Caco-2 (cell line): ENCODE measurements at regions of chr2 and their contacts with region 1.

Region 1: GRCh38 chr2:10043906-10044601 is 704 bp downstream of the KLF11 start:
- DNase-seq: peak; percentile 98 to 100
- H3K4me3 ChIP-seq: peak overlapping the region; percentile 96
- H3K4me3 Mint-ChIP-seq: peak overlapping the region; percentile 95
- H3K27ac Mint-ChIP-seq: peak overlapping the region; percentile 96
- H3K4me1 ChIP-seq: peaks cover 20% of the 10 kb centered on the region
- H3K4me1 Mint-ChIP-seq: peaks cover 16% of the 10 kb centered on the region
- H3K27me3 ChIP-seq: no peaks in the 10 kb centered on the region
- H3K27me3 Mint-ChIP-seq: no peaks in the 10 kb centered on the region
- CTCF ChIP-seq: no peak

Region 2: GRCh38 chr2:9799665-9800632 is 244.1 kb before region 1 on chr2:
- CTCF ChIA-PET with region 1: interaction called, 4 read pairs
- POLR2A ChIA-PET with region 1: no interaction called
- intact Hi-C with region 1: loop called (anchors 1 kb)
- DNase-seq: peak; percentile 88 to 93
- H3K4me3 ChIP-seq: no peak overlapping the region
- H3K4me3 Mint-ChIP-seq: peak overlapping the region; percentile 56
- H3K27ac Mint-ChIP-seq: no peak overlapping the region
- H3K4me1 ChIP-seq: peaks cover 45% of the 10 kb centered on the region
- H3K4me1 Mint-ChIP-seq: peaks cover 29% of the 10 kb centered on the region
- H3K27me3 ChIP-seq: no peaks in the 10 kb centered on the region
- H3K27me3 Mint-ChIP-seq: no peaks in the 10 kb centered on the region
- CTCF ChIP-seq: peak; percentile 95 to 99

Region 3: DNA sequence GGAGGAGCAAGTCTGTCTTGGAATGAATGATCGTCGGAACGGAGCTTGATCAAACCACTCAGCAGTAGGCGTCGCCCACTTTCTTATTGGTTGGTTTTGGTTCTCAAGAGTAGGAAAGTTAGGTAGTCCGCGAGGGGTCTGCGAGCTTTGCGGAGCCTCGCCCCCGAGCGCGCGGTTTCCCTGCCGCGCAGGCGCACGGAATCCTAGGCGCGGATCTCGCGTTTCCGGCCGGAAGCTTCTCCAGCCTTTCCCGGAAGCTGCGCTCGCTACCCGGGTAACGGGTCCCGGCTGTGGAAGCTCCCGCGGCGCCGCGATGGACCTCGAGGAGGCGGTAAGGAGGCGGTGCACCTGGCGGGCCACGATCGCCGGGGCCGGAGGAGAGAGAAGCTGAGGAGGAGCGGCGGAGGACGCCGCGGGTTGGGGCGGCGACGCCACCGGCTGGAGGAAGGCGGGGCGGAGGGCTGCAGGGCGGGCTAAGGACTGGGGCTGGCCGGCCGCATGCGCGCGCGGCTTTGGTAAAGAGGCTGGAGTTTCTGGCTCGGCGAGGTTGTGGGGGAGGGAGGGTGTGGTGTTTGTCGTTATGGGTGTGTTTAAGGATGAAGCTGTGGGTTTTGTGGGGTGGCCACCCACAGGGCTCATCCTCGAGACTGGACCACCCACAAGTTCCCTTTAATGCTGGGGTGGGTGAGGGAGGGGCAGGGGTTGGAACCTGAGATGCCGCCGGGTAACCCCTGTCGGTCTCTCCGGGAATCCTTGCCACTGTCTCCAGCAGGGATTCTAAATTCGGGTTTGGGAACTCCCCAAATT is 200.6 kb before region 1 on chr2 and contains the start of gene TAF1B:
- CTCF ChIA-PET with region 1: interaction called, 7 read pairs
- POLR2A ChIA-PET with region 1: interaction called, 15 read pairs
- intact Hi-C with region 1: loop called (anchors 1 kb)
- DNase-seq: peak; percentile 94 to 96
- H3K4me3 ChIP-seq: peak within 1 kb of the TSS; percentile 74
- H3K4me3 Mint-ChIP-seq: peak within 1 kb of the TSS; percentile 89
- H3K27ac Mint-ChIP-seq: peak within 1 kb of the TSS; percentile 89
- H3K4me1 ChIP-seq: 0 out of 2 replicates have a peak, but pooled peaks cover 8% of the 10 kb centered on the region
- H3K4me1 Mint-ChIP-seq: peaks cover 22% of the 10 kb centered on the region
- H3K27me3 ChIP-seq: no peaks in the 10 kb centered on the region
- H3K27me3 Mint-ChIP-seq: no peaks in the 10 kb centered on the region
- CTCF ChIP-seq: peak; percentile 26 to 30
- total RNA-seq, gene TAF1B: 24.8 and 25.3 TPM in 2 replicates

Region 4: GRCh38 chr2:10057231-10058107 is 13.4 kb after region 1 on chr2:
- CTCF ChIA-PET with region 1: interaction called, 19 read pairs
- POLR2A ChIA-PET with region 1: interaction called, 13 read pairs
- intact Hi-C with region 1: no loop called
- DNase-seq: peak; percentile 90 to 95
- H3K4me3 ChIP-seq: peak overlapping the region; percentile 37
- H3K4me3 Mint-ChIP-seq: peak overlapping the region; percentile 71
- H3K27ac Mint-ChIP-seq: peak overlapping the region; percentile 71
- H3K4me1 ChIP-seq: peaks cover 13% of the 10 kb centered on the region
- H3K4me1 Mint-ChIP-seq: peaks cover 14% of the 10 kb centered on the region
- H3K27me3 ChIP-seq: no peaks in the 10 kb centered on the region
- H3K27me3 Mint-ChIP-seq: no peaks in the 10 kb centered on the region
- CTCF ChIP-seq: no peak

Region 5: DNA sequence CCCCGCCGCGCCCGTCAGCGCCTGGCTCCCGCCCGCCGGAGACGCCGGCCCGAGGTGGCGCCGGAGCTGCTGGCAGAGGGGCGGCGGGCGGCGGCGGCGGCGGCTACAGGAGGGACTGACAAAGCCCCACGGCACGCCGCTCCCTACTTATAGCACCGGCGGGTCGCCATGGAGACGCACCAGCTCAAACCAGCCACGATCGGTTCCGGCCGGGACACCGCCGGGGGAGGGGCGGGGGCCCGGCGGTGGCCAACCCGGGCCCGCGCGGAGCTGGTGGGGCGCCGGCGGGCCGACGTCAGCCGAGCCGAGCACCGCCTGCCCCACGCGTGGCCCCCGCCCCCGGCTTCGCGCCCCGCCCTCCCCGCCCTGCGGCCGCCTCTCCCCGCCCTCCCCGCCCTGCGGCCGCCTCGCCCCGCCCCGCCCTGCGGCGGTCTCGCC is 404.2 kb after region 1 on chr2 and contains the start of gene ODC1:
- CTCF ChIA-PET with region 1: no interaction called
- POLR2A ChIA-PET with region 1: interaction called, 12 read pairs
- intact Hi-C with region 1: no loop called
- DNase-seq: peak; percentile 98 to 99
- H3K4me3 ChIP-seq: peak within 1 kb of the TSS; percentile 97
- H3K4me3 Mint-ChIP-seq: peak within 1 kb of the TSS; percentile 84
- H3K27ac Mint-ChIP-seq: peak within 1 kb of the TSS; percentile 87
- H3K4me1 ChIP-seq: peaks cover 17% of the 10 kb centered on the region
- H3K4me1 Mint-ChIP-seq: peaks cover 17% of the 10 kb centered on the region
- H3K27me3 ChIP-seq: no peaks in the 10 kb centered on the region
- H3K27me3 Mint-ChIP-seq: no peaks in the 10 kb centered on the region
- CTCF ChIP-seq: no peak
- total RNA-seq, gene ODC1: 277 and 285 TPM in 2 replicates